ENCODE measurements at regions of chr12 and their contacts with region 1.

Region 1: GRCh38 chr12:50211392-50212070 is 44.4 kb upstream of the CERS5 start:
- DNase-seq: no peak
- ATAC-seq: peak; percentile 6; the same call in 1 of the 3 replicates
- H3K4me3 ChIP-seq: no peak overlapping the region
- H3K27ac ChIP-seq: no peak overlapping the region; the same call in 1 of the 2 replicates
- H3K4me1 ChIP-seq: peaks cover 13% of the 10 kb centered on the region
- H3K27me3 ChIP-seq: no peaks in the 10 kb centered on the region
- CTCF ChIP-seq: peak in 1 of 3 experiments; percentile 39; a peak in 2 of 6 replicates
- EP300 ChIP-seq: no peak
- POLR2A ChIP-seq: no peak
- RAD21 ChIP-seq: peak; percentile 27; the same call in 1 of the 2 replicates

Region 2: DNA sequence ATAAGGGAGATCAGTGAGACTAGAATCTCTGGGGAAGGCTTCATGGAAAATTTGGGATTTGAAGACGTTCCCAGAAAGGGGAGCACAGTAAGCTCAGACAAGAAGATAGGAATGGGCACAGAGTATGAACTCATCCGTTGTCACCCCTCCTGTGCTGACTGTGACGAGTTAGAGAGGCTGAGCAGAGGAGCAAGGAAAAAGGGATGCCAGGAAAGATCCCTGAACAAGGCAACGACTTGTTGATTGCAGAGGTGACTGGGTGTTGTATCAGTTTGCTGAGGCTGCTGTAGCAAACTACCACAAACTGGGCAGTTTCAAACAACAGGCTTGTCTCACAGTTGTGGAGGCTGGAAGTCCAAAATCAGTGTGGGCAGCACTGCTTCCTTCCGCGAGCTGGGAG is 113.6 kb before region 1 on chr12:
- CTCF ChIA-PET with region 1: no interaction called
- POLR2A ChIA-PET with region 1: no interaction called
- RAD21 ChIA-PET with region 1: no interaction called
- SMC1A ChIA-PET with region 1: no interaction called
- in situ Hi-C with region 1: no loop called
- intact Hi-C with region 1: no loop called
- DNase-seq: no peak
- ATAC-seq: no peak
- H3K4me3 ChIP-seq: no peak overlapping the region
- H3K27ac ChIP-seq: no peak overlapping the region
- H3K4me1 ChIP-seq: no peaks in the 10 kb centered on the region
- H3K27me3 ChIP-seq: no peaks in the 10 kb centered on the region
- CTCF ChIP-seq: no peak
- EP300 ChIP-seq: no peak
- POLR2A ChIP-seq: no peak
- RAD21 ChIP-seq: no peak

Region 3: GRCh38 chr12:50174971-50175715 is 36.4 kb before region 1 on chr12:
- CTCF ChIA-PET with region 1: interaction called, 7 read pairs
- POLR2A ChIA-PET with region 1: no interaction called
- RAD21 ChIA-PET with region 1: interaction called, 5 read pairs
- SMC1A ChIA-PET with region 1: interaction called, 11 read pairs
- in situ Hi-C with region 1: no loop called
- intact Hi-C with region 1: no loop called
- DNase-seq: no peak
- ATAC-seq: peak; percentile 34; the same call in 1 of the 3 replicates
- H3K4me3 ChIP-seq: no peak overlapping the region
- H3K27ac ChIP-seq: no peak overlapping the region
- H3K4me1 ChIP-seq: no peaks in the 10 kb centered on the region
- H3K27me3 ChIP-seq: no peaks in the 10 kb centered on the region
- CTCF ChIP-seq: peak; percentile 47 to 64 (median 53); a peak in 5 of 6 replicates
- EP300 ChIP-seq: no peak
- POLR2A ChIP-seq: no peak
- RAD21 ChIP-seq: peak; percentile 73

Region 4: DNA sequence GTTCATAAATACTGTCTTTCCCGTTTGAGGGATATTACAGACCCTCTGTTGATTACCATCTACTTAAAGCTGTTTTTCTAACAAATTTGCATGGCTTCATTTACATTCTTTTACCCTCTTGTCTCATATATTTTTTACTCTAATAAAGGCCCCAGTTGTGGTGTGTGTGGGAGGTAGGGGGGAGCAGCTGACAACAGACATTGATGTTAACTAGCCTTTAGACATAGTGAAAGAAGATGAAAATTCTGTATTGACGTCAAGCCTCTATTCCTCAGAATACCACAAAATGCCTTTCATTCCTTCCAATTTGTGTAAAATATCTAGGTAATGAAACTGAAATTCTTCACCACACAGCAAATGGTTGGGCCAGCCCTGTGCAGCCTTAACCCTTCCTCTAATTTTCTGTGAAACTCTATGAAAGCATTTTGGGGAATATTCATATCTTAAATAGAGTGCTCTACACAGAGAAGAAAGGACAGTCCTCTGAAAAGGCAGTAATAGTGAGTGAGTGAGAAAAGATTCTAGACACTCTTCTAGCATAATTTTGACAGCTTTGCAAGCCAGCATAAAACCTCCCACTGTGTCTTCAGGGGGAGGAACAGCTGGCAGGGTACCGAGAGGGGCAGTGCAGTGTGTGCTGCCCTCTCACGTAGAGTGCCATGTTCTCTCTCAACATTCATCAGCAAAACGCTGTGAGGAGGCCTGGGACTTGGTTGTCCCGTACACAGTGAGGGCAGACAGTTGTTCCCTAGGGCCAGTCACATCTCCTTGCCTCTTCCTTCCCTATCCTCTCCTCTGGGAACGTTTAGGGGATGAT is 24.2 kb before region 1 on chr12:
- CTCF ChIA-PET with region 1: interaction called, 5 read pairs
- POLR2A ChIA-PET with region 1: interaction called, 3 read pairs
- RAD21 ChIA-PET with region 1: interaction called, 6 read pairs
- SMC1A ChIA-PET with region 1: interaction called, 16 read pairs
- in situ Hi-C with region 1: no loop called
- intact Hi-C with region 1: no loop called
- DNase-seq: peak; percentile 47
- ATAC-seq: peak; percentile 91
- H3K4me3 ChIP-seq: no peak overlapping the region
- H3K27ac ChIP-seq: peak overlapping the region; percentile 64
- H3K4me1 ChIP-seq: peaks cover 28% of the 10 kb centered on the region
- H3K27me3 ChIP-seq: no peaks in the 10 kb centered on the region
- CTCF ChIP-seq: no peak
- EP300 ChIP-seq: peak; percentile 94 to 96; a peak in 3 of 4 replicates
- POLR2A ChIP-seq: no peak
- RAD21 ChIP-seq: 0 out of 2 replicates have a peak, but pooled peaks have one; percentile 6

Region 5: GRCh38 chr12:50246873-50247612 is 35.5 kb after region 1 on chr12:
- CTCF ChIA-PET with region 1: interaction called, 14 read pairs
- POLR2A ChIA-PET with region 1: interaction called, 7 read pairs
- RAD21 ChIA-PET with region 1: interaction called, 25 read pairs
- SMC1A ChIA-PET with region 1: interaction called, 46 read pairs
- in situ Hi-C with region 1: no loop called
- intact Hi-C with region 1: no loop called
- DNase-seq: peak; percentile 62
- ATAC-seq: peak; percentile 80
- H3K4me3 ChIP-seq: peak overlapping the region; percentile 5; the same call in 1 of the 2 replicates
- H3K27ac ChIP-seq: peak overlapping the region; percentile 83
- H3K4me1 ChIP-seq: peaks cover 38% of the 10 kb centered on the region
- H3K27me3 ChIP-seq: no peaks in the 10 kb centered on the region
- CTCF ChIP-seq: no peak
- EP300 ChIP-seq: peak in 1 of 2 experiments; percentile 65; a peak in 1 of 4 replicates
- POLR2A ChIP-seq: no peak
- RAD21 ChIP-seq: no peak

Region 6: GRCh38 chr12:50257686-50258551 is 46.4 kb after region 1 on chr12:
- CTCF ChIA-PET with region 1: interaction called, 6 read pairs
- POLR2A ChIA-PET with region 1: interaction called, 8 read pairs
- RAD21 ChIA-PET with region 1: interaction called, 19 read pairs
- SMC1A ChIA-PET with region 1: interaction called, 17 read pairs
- in situ Hi-C with region 1: no loop called
- intact Hi-C with region 1: no loop called
- DNase-seq: no peak
- ATAC-seq: no peak
- H3K4me3 ChIP-seq: no peak overlapping the region
- H3K27ac ChIP-seq: no peak overlapping the region
- H3K4me1 ChIP-seq: peaks cover 20% of the 10 kb centered on the region
- H3K27me3 ChIP-seq: no peaks in the 10 kb centered on the region
- CTCF ChIP-seq: no peak
- EP300 ChIP-seq: no peak
- POLR2A ChIP-seq: no peak
- RAD21 ChIP-seq: no peak

Region 7: DNA sequence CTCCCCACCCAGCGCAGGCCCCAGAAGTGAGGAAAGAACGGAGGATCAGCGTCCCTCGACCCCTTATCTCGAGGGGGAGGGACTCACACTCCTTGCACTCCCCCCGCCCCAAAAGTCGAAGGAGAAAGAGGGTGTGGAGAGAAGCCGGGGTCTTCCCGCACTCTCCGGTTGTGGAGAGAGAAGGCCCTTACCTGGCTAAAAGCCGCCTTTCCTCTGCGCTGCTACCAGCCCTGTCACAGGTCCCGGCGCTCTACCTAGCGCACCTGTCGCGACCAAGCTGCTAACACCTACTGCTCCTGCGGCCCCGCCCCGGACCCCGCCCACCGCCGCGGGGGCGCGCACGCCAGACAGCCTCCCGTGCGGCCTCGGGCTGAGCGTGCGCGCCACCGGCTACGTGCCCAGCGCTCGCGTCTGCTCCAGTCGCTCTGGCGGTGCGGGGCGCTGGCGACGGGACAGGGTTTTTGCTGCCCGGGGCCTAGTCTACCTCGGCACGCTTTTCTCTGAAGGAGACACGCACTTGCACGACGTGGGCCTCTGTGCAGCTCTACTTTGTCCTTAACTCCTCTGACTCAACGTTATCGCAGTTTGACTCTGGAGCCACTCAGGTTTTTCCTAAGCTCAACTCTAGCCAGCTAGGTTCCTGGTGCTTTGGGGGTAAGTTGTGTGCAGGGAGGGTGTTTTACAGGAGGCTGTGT is 71.8 kb after region 1 on chr12 and contains the start of gene LIMA1:
- CTCF ChIA-PET with region 1: interaction called, 9 read pairs
- POLR2A ChIA-PET with region 1: interaction called, 3 read pairs
- RAD21 ChIA-PET with region 1: interaction called, 12 read pairs
- SMC1A ChIA-PET with region 1: interaction called, 27 read pairs
- in situ Hi-C with region 1: no loop called
- intact Hi-C with region 1: no loop called
- DNase-seq: peak; percentile 37
- ATAC-seq: peak; percentile 98
- H3K4me3 ChIP-seq: peak within 1 kb of the TSS; percentile 83
- H3K27ac ChIP-seq: peak within 1 kb of the TSS; percentile 66
- H3K4me1 ChIP-seq: peaks cover 10% of the 10 kb centered on the region
- H3K27me3 ChIP-seq: peaks cover 0 to 3% of the 10 kb centered on the region in 2 experiments; a peak in 2 of 4 replicates
- CTCF ChIP-seq: peak; percentile 19 to 37 (median 23); a peak in 2 of 6 replicates
- EP300 ChIP-seq: no peak
- POLR2A ChIP-seq: peak; percentile 93
- RAD21 ChIP-seq: peak; percentile 31
- polyA plus RNA-seq, gene LIMA1: 56.6 to 58.2 TPM

Region 8: DNA sequence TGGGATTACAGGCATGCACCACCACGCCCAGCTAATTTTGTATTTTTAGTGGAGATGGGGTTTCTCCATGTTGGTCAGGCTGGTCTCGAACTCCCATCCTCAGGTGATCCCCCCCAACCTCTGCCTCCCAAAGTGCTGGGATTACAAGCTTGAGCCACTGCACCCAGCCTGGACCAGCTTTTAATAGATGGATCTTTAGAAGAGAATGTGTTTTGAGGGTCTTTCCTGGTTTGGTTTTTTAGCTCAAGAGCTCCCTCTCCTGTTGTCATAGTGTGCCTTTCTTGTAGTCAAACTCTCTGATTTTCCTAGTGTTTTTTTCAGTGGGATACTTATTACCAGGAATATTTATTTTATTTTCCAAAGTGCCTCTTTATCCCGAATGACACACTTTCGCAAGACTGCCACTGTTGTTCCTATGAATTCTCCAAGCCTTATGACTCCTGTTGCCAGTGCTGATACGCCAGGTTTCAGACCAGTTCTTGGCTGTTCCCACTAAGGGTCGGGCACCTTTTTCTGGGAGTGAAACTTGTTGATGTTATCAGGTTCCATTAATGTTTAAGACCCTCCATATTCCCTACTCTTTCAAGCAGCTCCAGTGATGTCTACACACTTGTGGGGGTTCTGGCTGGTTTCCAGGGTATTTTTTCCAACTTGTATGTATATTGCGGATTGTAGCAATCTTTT is 103.2 kb after region 1 on chr12:
- CTCF ChIA-PET with region 1: interaction called, 68 read pairs
- POLR2A ChIA-PET with region 1: interaction called, 3 read pairs
- RAD21 ChIA-PET with region 1: interaction called, 34 read pairs
- SMC1A ChIA-PET with region 1: interaction called, 64 read pairs
- in situ Hi-C with region 1: no loop called
- intact Hi-C with region 1: no loop called
- DNase-seq: no peak
- ATAC-seq: peak; percentile 62
- H3K4me3 ChIP-seq: no peak overlapping the region
- H3K27ac ChIP-seq: no peak overlapping the region
- H3K4me1 ChIP-seq: no peaks in the 10 kb centered on the region
- H3K27me3 ChIP-seq: no peaks in the 10 kb centered on the region
- CTCF ChIP-seq: peak; percentile 44 to 63 (median 51); a peak in 5 of 6 replicates
- EP300 ChIP-seq: no peak
- POLR2A ChIP-seq: no peak
- RAD21 ChIP-seq: peak; percentile 83

Region 9: DNA sequence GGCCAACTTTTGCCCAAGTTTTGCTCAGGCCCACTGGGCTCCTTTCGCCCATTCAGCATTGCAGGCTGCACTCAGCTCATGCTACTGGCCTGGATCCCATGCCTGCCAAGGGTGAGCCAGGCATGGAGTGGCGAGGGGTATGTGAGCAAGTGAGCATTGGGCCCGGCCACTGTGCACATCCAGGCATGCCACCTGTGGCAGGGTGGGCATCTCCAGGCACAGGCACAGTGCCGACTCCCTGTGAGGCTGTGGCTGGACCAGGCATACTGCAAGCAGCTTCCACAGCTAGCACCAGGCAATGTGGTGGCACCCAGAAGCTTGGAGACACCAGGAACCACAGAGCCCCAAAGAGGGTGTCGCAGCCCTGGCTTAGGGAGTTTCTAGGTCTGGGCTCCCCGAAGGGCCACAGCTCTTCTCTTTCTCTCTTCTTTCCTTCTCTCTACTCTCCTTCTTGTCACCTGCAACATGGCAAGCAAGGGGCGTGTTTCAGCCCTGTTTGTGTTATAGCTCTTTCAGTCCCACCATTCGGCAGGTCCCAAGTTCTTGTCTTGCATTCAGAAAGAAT is 169.3 kb after region 1 on chr12:
- CTCF ChIA-PET with region 1: no interaction called
- POLR2A ChIA-PET with region 1: no interaction called
- RAD21 ChIA-PET with region 1: no interaction called
- SMC1A ChIA-PET with region 1: no interaction called
- in situ Hi-C with region 1: no loop called
- intact Hi-C with region 1: no loop called
- DNase-seq: no peak
- ATAC-seq: no peak
- H3K4me3 ChIP-seq: no peak overlapping the region
- H3K27ac ChIP-seq: no peak overlapping the region
- H3K4me1 ChIP-seq: no peaks in the 10 kb centered on the region
- H3K27me3 ChIP-seq: no peaks in the 10 kb centered on the region
- CTCF ChIP-seq: no peak
- EP300 ChIP-seq: no peak
- POLR2A ChIP-seq: no peak
- RAD21 ChIP-seq: no peak

Region 10: DNA sequence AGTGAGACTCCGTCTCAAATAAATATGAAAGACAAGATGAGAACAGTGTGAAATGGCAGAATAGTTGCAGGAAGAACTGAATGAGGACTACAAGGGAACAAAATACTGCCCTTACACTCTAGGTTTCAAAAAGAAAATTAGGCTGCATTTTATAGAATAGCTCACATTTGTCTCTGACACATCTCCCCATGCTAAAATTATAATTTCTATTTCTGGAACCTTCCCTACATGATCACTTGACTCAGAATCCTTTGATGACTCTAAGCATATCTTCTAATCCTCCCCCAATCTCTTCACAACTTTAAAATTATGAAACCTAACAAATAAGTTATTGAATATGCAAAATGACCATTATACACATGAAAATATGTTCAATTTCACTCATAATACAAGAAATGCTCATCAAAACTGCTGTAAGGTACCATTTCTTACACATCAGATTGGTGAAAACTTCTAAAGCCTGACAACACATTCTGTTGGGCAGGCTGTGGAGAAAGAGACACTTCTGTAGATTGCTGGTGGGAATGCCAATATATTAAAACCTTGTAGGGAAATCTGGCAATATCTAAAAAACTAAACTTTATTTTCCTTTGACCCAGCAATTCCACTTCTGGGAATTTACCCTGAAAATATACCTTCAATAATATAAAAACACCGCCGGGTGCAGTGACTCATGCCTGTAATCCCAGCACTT is 736.5 kb after region 1 on chr12:
- CTCF ChIA-PET with region 1: no interaction called
- POLR2A ChIA-PET with region 1: no interaction called
- RAD21 ChIA-PET with region 1: no interaction called
- SMC1A ChIA-PET with region 1: no interaction called
- in situ Hi-C with region 1: no loop called
- intact Hi-C with region 1: no loop called
- DNase-seq: no peak
- ATAC-seq: no peak
- H3K4me3 ChIP-seq: no peak overlapping the region
- H3K27ac ChIP-seq: no peak overlapping the region
- H3K4me1 ChIP-seq: no peaks in the 10 kb centered on the region
- H3K27me3 ChIP-seq: no peaks in the 10 kb centered on the region; a peak in 1 of 4 replicates
- CTCF ChIP-seq: no peak
- EP300 ChIP-seq: no peak
- POLR2A ChIP-seq: no peak
- RAD21 ChIP-seq: no peak